ENCODE measurements at regions of chr13 and their contacts with region 1.

Region 1: GRCh38 chr13:99250982-99251825 is 7.0 kb downstream of the GPR18 start:
- DNase-seq: no peak
- H3K4me3 Mint-ChIP-seq: no peak overlapping the region
- H3K27ac Mint-ChIP-seq: peak overlapping the region; percentile 54
- H3K4me1 Mint-ChIP-seq: peaks cover 47% of the 10 kb centered on the region
- H3K27me3 Mint-ChIP-seq: no peaks in the 10 kb centered on the region

Region 2: DNA sequence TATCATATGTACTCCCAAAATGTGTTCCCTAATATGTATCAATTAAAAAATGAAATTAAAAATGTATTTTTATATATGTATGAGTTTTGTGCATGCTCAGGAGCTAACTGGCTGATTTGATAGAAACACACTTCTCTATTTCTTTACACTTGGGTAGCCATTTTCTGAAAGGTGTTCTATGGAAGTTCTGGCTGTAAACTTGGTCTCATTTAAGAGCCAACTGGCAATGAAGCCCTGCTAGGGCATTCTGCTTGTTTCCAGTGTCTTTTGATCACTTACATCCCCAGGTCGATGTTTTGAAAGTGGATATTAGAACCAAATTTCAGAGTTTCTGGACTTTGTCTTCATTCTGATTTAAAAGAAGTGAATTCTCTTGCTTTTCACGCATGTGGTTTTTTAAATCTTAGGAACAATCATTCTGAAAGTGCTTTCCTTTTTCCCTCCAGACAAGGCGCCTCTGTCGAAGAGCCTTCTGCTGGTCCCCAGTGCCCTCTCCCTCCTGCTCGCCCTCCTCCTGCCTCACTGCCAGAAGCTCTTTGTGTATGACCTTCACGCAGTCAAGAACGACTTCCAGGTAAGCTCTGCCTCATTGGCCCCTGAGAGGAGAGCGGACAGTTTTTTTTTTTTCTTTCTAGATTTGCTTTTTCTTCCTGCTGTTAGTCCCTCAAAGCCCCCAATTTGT is 13.1 kb before region 1 on chr13:
- CTCF ChIA-PET with region 1: interaction called, 6 read pairs
- intact Hi-C with region 1: loop called (anchors 1 kb)
- DNase-seq: peak; percentile 54
- H3K4me3 Mint-ChIP-seq: peak overlapping the region; percentile 73
- H3K27ac Mint-ChIP-seq: peak overlapping the region; percentile 92
- H3K4me1 Mint-ChIP-seq: peaks cover 62% of the 10 kb centered on the region
- H3K27me3 Mint-ChIP-seq: no peaks in the 10 kb centered on the region